Activated naive CD4-positive, alpha-beta T cell treated with anti-CD3 and anti-CD28 coated beads for 36 hours (primary cell): ENCODE measurements at regions of chr10 and their contacts with region 1.

Region 1: DNA sequence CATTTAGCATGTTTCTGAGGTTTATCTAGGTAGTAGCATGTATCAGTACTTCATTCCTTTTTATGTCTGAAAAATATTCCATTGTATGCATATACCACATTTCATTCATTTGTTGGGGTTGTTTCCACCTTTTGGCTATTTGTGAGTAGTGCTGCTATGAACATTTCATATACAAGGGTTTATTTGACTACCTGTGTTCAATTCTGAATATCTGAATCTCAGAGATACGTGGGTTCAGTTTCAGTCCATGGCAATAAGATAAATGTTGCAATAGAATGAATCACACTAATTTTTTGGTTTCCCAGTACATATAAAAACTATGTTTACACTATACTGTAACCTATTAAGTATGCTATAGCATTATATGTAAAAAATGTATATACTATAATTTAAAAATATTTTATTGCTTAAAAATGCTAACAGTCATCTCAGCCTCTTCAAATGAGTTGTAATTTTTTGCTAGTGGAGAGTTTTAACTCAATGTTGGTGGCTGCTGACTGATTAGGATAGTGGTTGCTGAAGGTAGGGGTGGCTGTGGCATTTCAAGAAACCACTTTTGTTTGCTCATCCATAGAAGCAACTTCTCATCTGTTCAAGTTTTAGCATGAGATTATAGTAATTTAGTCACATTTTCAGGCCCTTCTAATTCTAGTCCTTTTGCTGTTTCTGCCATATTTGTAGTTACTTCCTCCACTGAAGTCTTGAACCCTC is 13.9 kb downstream of the PLEKHA1 start:
- DNase-seq: peak; percentile 73
- H3K4me3 Mint-ChIP-seq: no peak overlapping the region
- H3K27ac Mint-ChIP-seq: peak overlapping the region; percentile 80
- H3K4me1 Mint-ChIP-seq: peaks cover 57% of the 10 kb centered on the region
- H3K27me3 Mint-ChIP-seq: no peaks in the 10 kb centered on the region

Region 2: DNA sequence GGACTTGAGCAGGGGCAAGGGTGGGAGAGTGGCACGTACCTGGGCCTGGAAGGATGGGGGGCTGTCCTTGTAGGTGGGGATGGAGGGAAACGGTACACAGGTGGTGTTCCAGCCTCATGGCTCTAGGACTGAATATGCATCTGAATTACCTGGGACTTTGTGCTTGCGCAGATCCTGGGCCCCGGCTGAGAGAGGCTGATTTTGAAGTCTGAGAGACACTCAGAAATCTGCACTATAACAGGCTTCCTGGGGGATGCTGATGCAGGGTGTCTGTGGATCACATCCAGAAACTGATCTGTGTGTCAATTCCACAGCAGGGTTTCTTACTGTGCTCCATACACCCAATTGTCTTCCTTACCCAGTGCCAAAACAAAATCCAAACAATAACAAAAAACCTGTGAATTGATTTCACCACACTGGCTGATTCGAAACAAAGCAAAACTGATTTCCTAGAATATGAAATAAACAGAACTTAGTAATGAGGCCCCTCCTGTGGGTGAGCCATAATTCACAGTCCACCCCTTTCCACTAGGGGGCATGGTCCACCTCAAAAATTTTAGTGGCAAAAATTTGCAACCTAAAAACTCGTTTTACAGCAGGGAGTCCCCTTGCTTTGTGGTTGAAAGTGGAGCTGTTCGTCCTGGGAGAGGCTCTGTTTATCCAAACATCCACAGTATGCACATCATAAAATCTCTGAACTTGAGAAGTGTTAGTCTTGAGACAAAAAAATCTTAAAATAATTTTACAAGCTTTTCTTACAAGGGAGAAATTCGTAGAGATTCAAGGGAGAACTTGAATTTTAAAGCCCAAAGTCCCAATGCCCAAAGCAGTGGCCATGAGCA is 45.9 kb before region 1 on chr10:
- CTCF ChIA-PET with region 1: interaction called, 10 read pairs
- intact Hi-C with region 1: no loop called
- DNase-seq: peak; percentile 80
- H3K4me3 Mint-ChIP-seq: no peak overlapping the region
- H3K27ac Mint-ChIP-seq: peak overlapping the region; percentile 31
- H3K4me1 Mint-ChIP-seq: peaks cover 10% of the 10 kb centered on the region
- H3K27me3 Mint-ChIP-seq: no peaks in the 10 kb centered on the region

Region 3: GRCh38 chr10:122407375-122408125 is 19.1 kb after region 1 on chr10:
- CTCF ChIA-PET with region 1: interaction called, 6 read pairs
- intact Hi-C with region 1: loop called (anchors 1 kb)
- DNase-seq: peak; percentile 88
- H3K4me3 Mint-ChIP-seq: peak overlapping the region; percentile 30
- H3K27ac Mint-ChIP-seq: peak overlapping the region; percentile 46
- H3K4me1 Mint-ChIP-seq: peaks cover 47% of the 10 kb centered on the region
- H3K27me3 Mint-ChIP-seq: no peaks in the 10 kb centered on the region

Region 4: DNA sequence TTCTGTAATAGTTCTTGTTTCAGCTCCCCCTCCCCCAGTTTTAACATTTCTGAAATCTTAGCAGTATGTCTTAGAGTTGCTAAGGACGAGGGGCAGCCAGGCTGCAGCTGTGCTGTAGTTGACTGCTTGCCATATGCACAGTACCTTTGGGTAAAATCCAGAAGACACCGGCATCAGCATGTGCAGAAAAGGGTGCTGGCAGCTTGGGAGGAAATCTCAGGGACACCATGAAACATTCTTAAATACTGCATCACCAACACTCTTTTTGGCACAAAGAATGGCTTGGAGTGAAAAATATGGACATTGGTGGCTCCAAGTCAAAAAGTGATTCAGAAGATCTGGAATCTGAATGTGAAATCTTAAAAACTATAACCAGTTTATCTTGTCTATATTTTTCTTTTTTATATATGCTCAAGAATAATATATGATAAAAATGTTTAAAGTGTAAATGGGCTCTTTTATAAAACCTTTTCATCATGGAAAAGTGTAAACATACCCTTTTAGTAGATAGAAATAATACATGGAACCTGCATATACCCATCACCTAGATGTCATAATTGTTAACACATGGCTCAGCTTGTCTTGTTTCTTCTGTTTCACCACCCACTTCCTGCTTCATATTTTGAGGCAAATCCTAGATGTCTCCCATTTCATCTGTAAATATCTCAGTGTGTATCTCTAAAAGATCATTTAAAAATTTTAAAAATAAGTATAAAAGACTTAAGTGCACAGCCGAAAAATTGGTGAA is 31.6 kb after region 1 on chr10:
- CTCF ChIA-PET with region 1: interaction called, 3 read pairs
- intact Hi-C with region 1: loop called (anchors 1 kb)
- DNase-seq: no peak
- H3K4me3 Mint-ChIP-seq: no peak overlapping the region
- H3K27ac Mint-ChIP-seq: no peak overlapping the region
- H3K4me1 Mint-ChIP-seq: peaks cover 74% of the 10 kb centered on the region
- H3K27me3 Mint-ChIP-seq: no peaks in the 10 kb centered on the region